GM10248 (cell line): ENCODE measurements at regions of chr10 and their contacts with region 1.

Region 1: GRCh38 chr10:4733151-4733842 is 92.7 kb upstream of the AKR1E2 start:
- DNase-seq: no peak
- CTCF ChIP-seq: no peak

Region 2: DNA sequence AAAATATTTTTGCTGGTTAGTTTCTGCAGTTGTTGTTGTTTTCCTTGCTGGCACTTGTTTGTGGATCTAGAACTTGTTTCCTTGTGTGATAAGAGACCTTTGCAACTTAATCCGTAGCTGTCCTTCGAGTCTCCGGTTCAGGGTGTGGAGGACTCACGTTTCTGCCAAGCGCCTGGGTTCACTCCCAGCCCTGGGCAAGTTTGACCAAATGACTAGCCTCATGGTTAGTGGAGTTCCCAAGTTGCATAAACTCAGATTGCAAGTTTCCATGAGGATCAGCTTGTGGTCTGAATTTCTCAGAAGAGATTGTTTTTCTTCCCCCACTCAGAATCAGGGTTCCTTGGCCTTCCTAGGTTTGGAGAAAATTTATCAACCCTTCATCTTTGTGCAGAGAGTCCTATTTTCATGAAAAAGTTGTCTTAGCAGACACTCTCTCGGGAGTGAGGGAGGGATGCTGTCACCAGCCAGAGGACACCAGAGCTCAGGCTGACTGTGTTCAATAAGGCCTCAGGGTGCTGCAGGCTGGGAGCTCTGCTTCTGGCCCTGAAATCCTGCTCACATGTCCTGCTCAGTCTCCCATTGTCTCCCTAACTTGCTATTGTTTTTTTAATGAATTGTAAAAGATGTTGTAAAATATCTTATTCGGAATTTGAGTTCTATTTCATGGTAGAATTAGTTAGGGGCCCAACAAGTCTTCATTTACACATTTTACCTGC is 570.6 kb before region 1 on chr10:
- CTCF ChIA-PET with region 1: no interaction called
- POLR2A ChIA-PET with region 1: interaction called, 10 read pairs
- DNase-seq: no peak
- CTCF ChIP-seq: no peak

Region 3: GRCh38 chr10:4639960-4640359 is 93.3 kb before region 1 on chr10:
- CTCF ChIA-PET with region 1: no interaction called
- POLR2A ChIA-PET with region 1: no interaction called
- DNase-seq: no peak
- CTCF ChIP-seq: no peak

Region 4: DNA sequence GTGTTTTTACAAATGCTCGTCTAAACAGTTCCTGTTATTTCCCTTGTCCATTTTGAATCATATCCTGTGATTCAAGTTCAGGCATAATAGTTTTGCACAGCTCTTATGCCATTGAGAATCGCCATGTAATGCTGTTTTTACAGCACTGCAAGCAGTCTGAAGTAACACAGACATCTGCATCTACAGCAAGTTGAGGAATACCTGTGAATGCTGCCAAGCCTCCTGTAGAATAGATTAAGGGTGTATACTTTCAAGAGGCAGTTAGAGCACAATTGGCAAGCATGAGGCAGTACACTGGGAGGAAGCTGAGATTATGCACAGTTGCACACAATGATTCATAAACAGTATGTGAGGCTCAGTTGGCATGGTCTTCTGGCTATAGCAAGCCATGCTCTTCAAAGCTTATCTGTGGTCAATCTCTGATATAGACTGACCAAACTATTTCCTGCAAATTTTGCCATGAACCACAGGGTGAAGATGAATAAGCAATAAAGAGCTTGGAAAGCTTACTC is 29.2 kb before region 1 on chr10:
- CTCF ChIA-PET with region 1: no interaction called
- POLR2A ChIA-PET with region 1: interaction called, 10 read pairs
- DNase-seq: no peak
- CTCF ChIP-seq: no peak